Panc1 (cell line): ENCODE measurements at regions of chr19 and their contacts with region 1.

Region 1: GRCh38 chr19:3125900-3126524 is 9.8 kb upstream of the GNA15 start:
- DNase-seq: peak; percentile 24
- ATAC-seq: peak; percentile 88
- H3K4me3 ChIP-seq: no peak overlapping the region
- H3K27ac ChIP-seq: no peak overlapping the region
- H3K4me1 ChIP-seq: no peaks in the 10 kb centered on the region
- H3K27me3 ChIP-seq: no peaks in the 10 kb centered on the region
- CTCF ChIP-seq: peak; percentile 89

Region 2: DNA sequence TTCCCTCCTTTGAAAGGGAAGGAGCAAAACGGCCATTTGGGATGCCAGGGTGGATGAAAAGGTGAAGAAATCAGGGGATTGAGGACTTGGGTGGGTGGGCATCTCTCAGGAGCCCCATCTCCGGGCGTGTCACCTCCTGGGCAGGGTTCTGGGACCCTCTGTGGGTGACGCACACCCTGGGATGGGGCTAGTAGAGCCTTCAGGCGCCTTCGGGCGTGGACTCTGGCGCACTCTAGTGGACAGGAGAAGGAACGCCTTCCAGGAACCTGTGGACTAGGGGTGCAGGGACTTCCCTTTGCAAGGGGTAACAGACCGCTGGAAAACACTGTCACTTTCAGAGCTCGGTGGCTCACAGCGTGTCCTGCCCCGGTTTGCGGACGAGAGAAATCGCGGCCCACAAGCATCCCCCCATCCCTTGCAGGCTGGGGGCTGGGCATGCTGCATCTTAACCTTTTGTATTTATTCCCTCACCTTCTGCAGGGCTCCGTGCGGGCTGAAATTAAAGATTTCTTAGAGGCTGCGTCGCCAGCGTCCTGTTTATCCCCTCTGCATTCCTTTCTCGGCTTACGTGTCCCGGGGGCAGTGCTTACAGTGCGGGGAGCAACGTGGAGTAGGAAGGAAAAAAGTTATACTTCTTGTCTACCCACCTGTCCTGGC is 37.3 kb after region 1 on chr19:
- CTCF ChIA-PET with region 1: interaction called, 11 read pairs
- POLR2A ChIA-PET with region 1: no interaction called
- in situ Hi-C with region 1: no loop called
- intact Hi-C with region 1: no loop called
- DNase-seq: no peak
- ATAC-seq: peak; percentile 93
- H3K4me3 ChIP-seq: no peak overlapping the region
- H3K27ac ChIP-seq: no peak overlapping the region
- H3K4me1 ChIP-seq: no peaks in the 10 kb centered on the region; the same call in 1 of the 2 replicates
- H3K27me3 ChIP-seq: no peaks in the 10 kb centered on the region
- CTCF ChIP-seq: peak; percentile 93